GM10248 (cell line): ENCODE measurements at regions of chr2 and their contacts with region 1.

Region 1: GRCh38 chr2:189661148-189661956 is at the start of gene ASNSD1:
- DNase-seq: peak; percentile 96
- CTCF ChIP-seq: peak; percentile 96

Region 2: GRCh38 chr2:189648846-189649509 is 12.4 kb before region 1 on chr2:
- CTCF ChIA-PET with region 1: interaction called, 23 read pairs
- POLR2A ChIA-PET with region 1: no interaction called
- DNase-seq: no peak
- CTCF ChIP-seq: no peak

Region 3: GRCh38 chr2:189674374-189675112 is 13.2 kb after region 1 on chr2 and contains the start of gene ANKAR:
- CTCF ChIA-PET with region 1: interaction called, 129 read pairs
- POLR2A ChIA-PET with region 1: no interaction called
- DNase-seq: peak; percentile 90
- CTCF ChIP-seq: peak; percentile 84

Region 4: GRCh38 chr2:189685540-189686229 is 24.3 kb after region 1 on chr2:
- CTCF ChIA-PET with region 1: interaction called, 12 read pairs
- POLR2A ChIA-PET with region 1: no interaction called
- DNase-seq: no peak
- CTCF ChIP-seq: no peak

Region 5: DNA sequence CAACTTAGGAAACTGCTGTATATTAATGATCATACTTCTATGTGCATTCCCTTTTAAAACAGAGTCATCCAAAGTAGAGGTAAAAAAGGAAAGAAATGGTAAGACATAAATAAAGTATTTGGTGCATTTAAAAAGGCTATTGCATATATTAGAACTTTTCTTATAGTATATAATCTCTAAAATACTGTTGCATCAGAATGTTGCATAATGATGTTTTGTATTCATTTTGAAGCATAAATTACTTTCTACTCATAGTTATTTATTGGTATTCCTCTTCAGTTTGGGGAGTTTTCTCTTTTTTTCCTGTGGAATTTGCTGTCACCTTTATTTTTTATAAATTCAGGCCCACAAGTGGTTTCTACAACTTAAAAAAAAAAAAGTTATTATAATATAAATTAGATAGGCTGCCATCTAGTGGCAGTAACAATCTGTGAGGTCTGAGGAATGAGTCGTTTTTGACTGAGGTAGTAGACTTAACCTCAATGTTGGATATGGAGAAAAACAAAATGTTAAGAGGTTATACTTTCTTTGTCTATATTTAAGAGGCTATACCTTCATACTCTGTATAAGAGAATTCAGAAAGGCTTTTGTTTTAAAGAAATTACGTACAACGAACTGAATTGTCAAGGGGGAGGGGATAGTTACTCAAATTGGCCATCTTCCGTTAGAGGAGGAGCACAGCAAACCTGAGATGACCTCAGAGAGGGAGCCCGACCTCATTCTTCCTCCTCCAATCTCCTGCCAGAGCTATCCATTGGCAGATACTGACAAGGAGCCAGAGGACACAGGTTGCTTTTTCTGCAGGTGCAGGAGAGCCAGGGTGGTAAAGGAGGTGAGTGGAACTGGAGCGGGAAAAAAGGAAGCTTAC is 36.9 kb after region 1 on chr2:
- CTCF ChIA-PET with region 1: interaction called, 59 read pairs
- POLR2A ChIA-PET with region 1: no interaction called
- DNase-seq: peak; percentile 26
- CTCF ChIP-seq: peak; percentile 48

Region 6: GRCh38 chr2:189762551-189763298 is 101.4 kb after region 1 on chr2 and contains the start of gene OSGEPL1:
- CTCF ChIA-PET with region 1: interaction called, 41 read pairs
- POLR2A ChIA-PET with region 1: no interaction called
- DNase-seq: peak; percentile 82
- CTCF ChIP-seq: peak; percentile 68

Region 7: GRCh38 chr2:190069936-190070696 is 408.8 kb after region 1 on chr2:
- CTCF ChIA-PET with region 1: interaction called, 15 read pairs
- POLR2A ChIA-PET with region 1: no interaction called
- DNase-seq: peak; percentile 24
- CTCF ChIP-seq: peak; percentile 67